ENCODE measurements at regions of chr16 and their contacts with region 1.

Region 1: GRCh38 chr16:31179747-31180459 is at the start of gene FUS:
- DNase-seq: peak; percentile 86 to 98 (median 94)
- ATAC-seq: peak; percentile 69
- H3K4me3 ChIP-seq: peak within 1 kb of the TSS; percentile 87
- H3K4me3 Mint-ChIP-seq: peak within 1 kb of the TSS; percentile 97
- H3K27ac ChIP-seq: peak within 1 kb of the TSS; percentile 87 to 97
- H3K27ac Mint-ChIP-seq: peak within 1 kb of the TSS; percentile 95
- H3K4me1 ChIP-seq: peaks cover 67% of the 10 kb centered on the region
- H3K4me1 Mint-ChIP-seq: peaks cover 65% of the 10 kb centered on the region
- H3K27me3 ChIP-seq: no peaks in the 10 kb centered on the region
- H3K27me3 Mint-ChIP-seq: no peaks in the 10 kb centered on the region
- CTCF ChIP-seq: no peak
- total RNA-seq, gene FUS: 699 to 733 TPM

Region 2: DNA sequence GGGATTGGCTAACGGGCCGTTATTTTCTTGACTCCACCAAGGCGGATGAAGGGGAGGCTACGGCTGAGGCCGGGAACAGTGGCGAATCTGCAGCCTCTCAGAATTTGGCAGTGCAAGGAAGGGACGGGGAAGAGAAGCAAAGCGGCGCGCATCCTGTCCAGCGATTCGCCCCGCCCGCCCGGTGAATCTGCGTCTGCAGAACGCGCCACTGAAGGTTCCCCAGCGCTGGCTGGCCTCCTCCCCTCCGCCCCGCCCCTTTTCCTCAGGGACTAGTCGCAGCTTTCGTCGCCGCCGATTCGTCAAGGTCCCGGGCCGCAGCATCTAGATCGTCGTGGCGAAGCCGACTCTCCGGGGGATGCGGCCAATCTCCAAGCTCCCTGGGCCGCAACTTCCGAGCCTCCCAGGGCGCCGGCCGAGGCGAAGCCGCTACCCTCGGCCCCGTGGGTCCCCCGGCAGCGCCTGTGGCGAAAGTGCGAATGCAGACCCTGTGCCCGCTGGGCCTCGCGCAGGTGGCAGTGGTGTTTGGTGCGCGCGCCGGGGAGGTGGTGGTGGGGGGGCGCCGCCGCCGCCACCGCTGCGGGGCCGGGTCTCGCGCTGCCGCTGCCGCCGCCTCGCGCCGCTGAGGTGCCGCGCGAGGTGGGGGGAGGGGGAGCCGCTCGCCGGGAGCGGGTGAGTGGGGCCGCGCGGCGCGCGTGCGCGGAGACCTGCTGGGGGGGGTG is 222.3 kb before region 1 on chr16 and contains the start of gene SETD1A:
- CTCF ChIA-PET with region 1: no interaction called
- POLR2A ChIA-PET with region 1: interaction called, 3 read pairs
- intact Hi-C with region 1: loop called in 1 of 2 experiments (anchors 1 kb)
- DNase-seq: peak; percentile 94 to 99 (median 97)
- ATAC-seq: peak; percentile 86
- H3K4me3 ChIP-seq: peak within 1 kb of the TSS; percentile 82
- H3K4me3 Mint-ChIP-seq: peak within 1 kb of the TSS; percentile 97
- H3K27ac ChIP-seq: peak within 1 kb of the TSS; percentile 95
- H3K27ac Mint-ChIP-seq: peak within 1 kb of the TSS; percentile 97
- H3K4me1 ChIP-seq: peaks cover 37% of the 10 kb centered on the region
- H3K4me1 Mint-ChIP-seq: peaks cover 39% of the 10 kb centered on the region
- H3K27me3 ChIP-seq: no peaks in the 10 kb centered on the region
- H3K27me3 Mint-ChIP-seq: no peaks in the 10 kb centered on the region
- CTCF ChIP-seq: no peak
- total RNA-seq, gene SETD1A: 40.1 to 41.2 TPM

Region 3: GRCh38 chr16:31117391-31118197 is 62.3 kb before region 1 on chr16 and contains the start of gene KAT8:
- CTCF ChIA-PET with region 1: no interaction called
- POLR2A ChIA-PET with region 1: interaction called, 37 read pairs
- intact Hi-C with region 1: loop called in 1 of 2 experiments (anchors 2 kb)
- DNase-seq: peak; percentile 93 to 99 (median 96)
- ATAC-seq: peak; percentile 91
- H3K4me3 ChIP-seq: peak within 1 kb of the TSS; percentile 68
- H3K4me3 Mint-ChIP-seq: peak within 1 kb of the TSS; percentile 88
- H3K27ac ChIP-seq: peak within 1 kb of the TSS; percentile 87 to 95
- H3K27ac Mint-ChIP-seq: peak within 1 kb of the TSS; percentile 83
- H3K4me1 ChIP-seq: peaks cover 23% of the 10 kb centered on the region
- H3K4me1 Mint-ChIP-seq: peaks cover 17% of the 10 kb centered on the region
- H3K27me3 ChIP-seq: no peaks in the 10 kb centered on the region
- H3K27me3 Mint-ChIP-seq: no peaks in the 10 kb centered on the region
- CTCF ChIP-seq: no peak
- total RNA-seq, gene KAT8: 114 to 124 TPM

Region 4: DNA sequence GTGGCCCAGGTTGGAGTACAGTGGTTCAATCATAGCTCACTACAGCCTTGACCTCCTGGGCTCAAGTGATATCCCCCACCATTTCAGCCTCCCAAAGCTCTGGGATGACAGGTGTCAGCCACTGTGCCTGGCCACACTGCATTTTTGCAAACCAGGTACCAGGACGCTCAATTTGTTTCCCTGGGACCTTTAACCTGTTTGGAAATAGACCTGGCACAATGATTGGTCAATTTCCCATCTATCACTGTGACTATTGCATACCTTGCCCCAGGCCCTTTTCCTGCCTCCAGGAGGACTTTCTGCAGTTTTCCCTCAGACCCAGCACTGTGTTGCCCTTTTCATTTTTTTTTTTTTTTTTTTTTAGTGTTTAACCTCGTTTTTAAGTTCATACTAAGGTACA is 11.1 kb before region 1 on chr16:
- CTCF ChIA-PET with region 1: no interaction called
- POLR2A ChIA-PET with region 1: interaction called, 16 read pairs
- intact Hi-C with region 1: no loop called
- DNase-seq: no peak
- ATAC-seq: no peak
- H3K4me3 ChIP-seq: no peak overlapping the region
- H3K4me3 Mint-ChIP-seq: no peak overlapping the region
- H3K27ac ChIP-seq: no peak overlapping the region
- H3K27ac Mint-ChIP-seq: no peak overlapping the region
- H3K4me1 ChIP-seq: no peaks in the 10 kb centered on the region
- H3K4me1 Mint-ChIP-seq: no peaks in the 10 kb centered on the region
- H3K27me3 ChIP-seq: no peaks in the 10 kb centered on the region
- H3K27me3 Mint-ChIP-seq: no peaks in the 10 kb centered on the region
- CTCF ChIP-seq: no peak

Region 5: GRCh38 chr16:31215287-31216162 is 35.6 kb after region 1 on chr16:
- CTCF ChIA-PET with region 1: no interaction called
- POLR2A ChIA-PET with region 1: interaction called, 15 read pairs
- intact Hi-C with region 1: no loop called
- DNase-seq: peak in 4 of 14 experiments; percentile 16 to 55 (median 35)
- ATAC-seq: peak; percentile 79
- H3K4me3 ChIP-seq: peak overlapping the region; percentile 38
- H3K4me3 Mint-ChIP-seq: peak overlapping the region; percentile 76
- H3K27ac ChIP-seq: no peak overlapping the region
- H3K27ac Mint-ChIP-seq: no peak overlapping the region
- H3K4me1 ChIP-seq: peaks cover 25% of the 10 kb centered on the region
- H3K4me1 Mint-ChIP-seq: peaks cover 16% of the 10 kb centered on the region
- H3K27me3 ChIP-seq: peaks cover 38 to 49% of the 10 kb centered on the region in 2 experiments
- H3K27me3 Mint-ChIP-seq: peaks cover 51% of the 10 kb centered on the region
- CTCF ChIP-seq: no peak

Region 6: GRCh38 chr16:31700526-31701388 is 520.9 kb after region 1 on chr16:
- CTCF ChIA-PET with region 1: no interaction called
- POLR2A ChIA-PET with region 1: interaction called, 12 read pairs
- intact Hi-C with region 1: loop called in 1 of 2 experiments (anchors 10 kb)
- DNase-seq: peak; percentile 67 to 93 (median 80)
- ATAC-seq: peak; percentile 72
- H3K4me3 ChIP-seq: peak overlapping the region; percentile 89
- H3K4me3 Mint-ChIP-seq: peak overlapping the region; percentile 96
- H3K27ac ChIP-seq: peak overlapping the region; percentile 88 to 92
- H3K27ac Mint-ChIP-seq: peak overlapping the region; percentile 99
- H3K4me1 ChIP-seq: peaks cover 45% of the 10 kb centered on the region
- H3K4me1 Mint-ChIP-seq: peaks cover 37% of the 10 kb centered on the region
- H3K27me3 ChIP-seq: no peaks in the 10 kb centered on the region
- H3K27me3 Mint-ChIP-seq: no peaks in the 10 kb centered on the region
- CTCF ChIP-seq: no peak